Breast epithelium (tissue), 4 donors: ENCODE measurements at regions of chr2 and their contacts with region 1.

Region 1: DNA sequence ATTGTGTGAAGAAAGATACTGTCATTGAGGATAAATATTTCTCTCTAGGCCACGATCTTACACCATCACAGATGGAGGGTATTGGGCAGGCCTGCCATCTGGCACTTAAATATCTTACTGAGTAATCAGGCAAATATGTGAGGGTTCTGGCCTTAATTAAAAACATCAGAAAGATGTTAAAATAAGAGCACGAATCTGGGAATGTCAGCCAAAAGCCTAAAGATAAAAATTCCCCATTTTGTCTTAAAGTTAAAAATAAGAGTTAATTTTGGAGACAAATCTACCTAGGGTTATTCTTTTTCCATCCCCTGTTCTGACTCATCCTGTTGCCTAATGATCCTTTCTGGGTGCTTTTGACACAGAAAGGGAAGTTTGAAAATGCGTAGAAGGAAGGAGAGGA is 121.0 kb downstream of the SUCLG1 start:
- DNase-seq: no peak
- H3K4me3 ChIP-seq: no peak overlapping the region
- H3K27ac ChIP-seq: no peak overlapping the region
- H3K4me1 ChIP-seq: no peaks in the 10 kb centered on the region
- H3K27me3 ChIP-seq: no peaks in the 10 kb centered on the region
- CTCF ChIP-seq: no peak
- POLR2A ChIP-seq: no peak

Region 2: DNA sequence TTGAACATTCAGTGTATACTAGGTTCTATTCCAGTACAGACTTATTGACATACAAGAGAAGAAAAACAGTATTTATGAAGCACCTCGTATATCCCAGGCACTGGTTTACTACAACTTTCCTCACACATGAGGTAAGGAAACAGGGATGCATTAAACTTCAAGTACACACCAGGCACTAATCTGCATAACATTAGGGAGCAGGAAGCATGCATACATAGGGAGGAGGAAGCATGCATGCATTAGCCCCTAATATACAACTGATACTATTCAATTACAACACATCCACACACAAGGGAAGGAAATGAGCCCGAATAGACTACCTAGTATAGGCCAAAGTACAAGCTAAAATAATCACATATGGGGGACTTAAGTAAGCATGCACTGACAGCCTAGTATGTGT is 404.3 kb before region 1 on chr2:
- intact Hi-C with region 1: no loop called
- DNase-seq: no peak
- H3K4me3 ChIP-seq: no peak overlapping the region
- H3K27ac ChIP-seq: no peak overlapping the region
- H3K4me1 ChIP-seq: no peaks in the 10 kb centered on the region
- H3K27me3 ChIP-seq: no peaks in the 10 kb centered on the region
- CTCF ChIP-seq: no peak
- POLR2A ChIP-seq: no peak

Region 3: GRCh38 chr2:84320940-84321339 is 17.1 kb before region 1 on chr2:
- intact Hi-C with region 1: no loop called
- DNase-seq: no peak
- H3K4me3 ChIP-seq: no peak overlapping the region
- H3K27ac ChIP-seq: no peak overlapping the region
- H3K4me1 ChIP-seq: no peaks in the 10 kb centered on the region
- H3K27me3 ChIP-seq: no peaks in the 10 kb centered on the region
- CTCF ChIP-seq: no peak
- POLR2A ChIP-seq: no peak

Region 4: GRCh38 chr2:84450288-84451227 is 112.5 kb after region 1 on chr2:
- intact Hi-C with region 1: no loop called
- DNase-seq: no peak
- H3K4me3 ChIP-seq: no peak overlapping the region
- H3K27ac ChIP-seq: peak overlapping the region in 1 of 2 donors; percentile 56
- H3K4me1 ChIP-seq: no peaks in the 10 kb centered on the region
- H3K27me3 ChIP-seq: no peaks in the 10 kb centered on the region
- CTCF ChIP-seq: no peak
- POLR2A ChIP-seq: no peak

Region 5: GRCh38 chr2:84732897-84733778 is 395.1 kb after region 1 on chr2:
- intact Hi-C with region 1: loop called (anchors 5 kb)
- DNase-seq: no peak
- H3K4me3 ChIP-seq: no peak overlapping the region
- H3K27ac ChIP-seq: no peak overlapping the region
- H3K4me1 ChIP-seq: no peaks in the 10 kb centered on the region
- H3K27me3 ChIP-seq: no peaks in the 10 kb centered on the region
- CTCF ChIP-seq: no peak
- POLR2A ChIP-seq: no peak

Region 6: DNA sequence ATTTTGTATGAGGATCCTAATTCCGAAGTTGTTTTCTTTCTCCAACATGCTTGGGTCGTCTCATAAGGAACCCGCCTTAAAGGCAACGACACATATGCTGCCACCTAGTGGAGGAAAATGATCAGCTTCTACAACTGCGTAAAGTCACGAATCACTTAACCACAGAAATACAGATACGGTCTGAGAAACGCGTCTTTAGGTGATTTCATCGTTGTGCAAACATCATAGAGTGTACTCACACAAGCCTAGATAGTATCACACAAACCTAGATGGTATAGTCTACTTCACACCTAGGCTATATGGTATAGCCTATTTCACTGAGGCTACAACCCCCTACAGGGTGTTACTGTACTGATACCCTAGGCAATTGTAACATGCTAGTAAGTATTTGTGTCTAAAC is 1369.2 kb after region 1 on chr2:
- intact Hi-C with region 1: no loop called
- DNase-seq: peak in 1 of 2 donors; percentile 54
- H3K4me3 ChIP-seq: no peak overlapping the region
- H3K27ac ChIP-seq: peak overlapping the region in 1 of 2 donors; percentile 83
- H3K4me1 ChIP-seq: peaks cover 0 to 4% of the 10 kb centered on the region in 2 donors
- H3K27me3 ChIP-seq: no peaks in the 10 kb centered on the region
- CTCF ChIP-seq: peak; percentile 72 to 84 (median 81)
- POLR2A ChIP-seq: no peak